ENCODE measurements at regions of chr10 and their contacts with region 1.

Region 1: DNA sequence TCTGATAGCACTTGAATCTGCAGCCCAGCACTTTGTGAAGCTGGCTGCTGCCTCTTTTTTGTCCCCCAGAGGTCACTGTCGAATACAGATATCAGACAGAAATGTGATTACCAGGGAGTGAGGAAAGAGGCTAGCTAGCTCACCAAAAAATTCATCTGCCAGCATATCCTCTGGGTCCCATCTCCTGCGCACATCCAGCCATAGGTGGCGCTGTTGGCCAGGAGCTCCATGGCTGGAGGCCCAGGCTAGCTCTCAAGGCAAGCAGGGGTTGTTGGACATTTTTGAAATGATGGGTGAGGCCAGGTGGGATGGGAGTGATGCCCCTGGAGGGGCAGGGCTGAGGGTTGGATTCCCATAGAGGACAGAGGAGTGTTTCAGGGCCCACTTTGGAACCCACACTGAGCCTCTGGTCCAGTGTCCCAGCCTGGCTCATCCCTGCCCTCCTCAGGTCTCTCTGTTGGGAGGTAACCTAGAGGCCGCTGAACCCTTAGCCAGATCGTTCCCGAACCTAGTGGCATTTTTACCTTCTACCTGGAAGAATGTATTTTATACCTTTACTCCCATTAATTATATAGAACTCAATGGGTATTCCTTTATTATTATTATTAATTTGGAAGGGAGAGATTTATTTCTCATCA is 14.8 kb downstream of the DPCD start:
- DNase-seq: peak; percentile 94
- ATAC-seq: peak; percentile 96
- H3K4me3 Mint-ChIP-seq: no peak overlapping the region
- H3K27ac Mint-ChIP-seq: peak overlapping the region; percentile 45; the same call in 1 of the 2 replicates
- H3K4me1 Mint-ChIP-seq: peaks cover 10% of the 10 kb centered on the region
- H3K27me3 Mint-ChIP-seq: no peaks in the 10 kb centered on the region
- CTCF ChIP-seq: peak; percentile 96

Region 2: GRCh38 chr10:101453791-101454718 is 148.8 kb before region 1 on chr10:
- CTCF ChIA-PET with region 1: no interaction called
- POLR2A ChIA-PET with region 1: no interaction called
- DNase-seq: no peak
- ATAC-seq: no peak
- H3K4me3 Mint-ChIP-seq: no peak overlapping the region
- H3K27ac Mint-ChIP-seq: no peak overlapping the region
- H3K4me1 Mint-ChIP-seq: no peaks in the 10 kb centered on the region
- H3K27me3 Mint-ChIP-seq: no peaks in the 10 kb centered on the region
- CTCF ChIP-seq: no peak

Region 3: GRCh38 chr10:101576211-101576863 is 26.5 kb before region 1 on chr10:
- CTCF ChIA-PET with region 1: interaction called, 30 read pairs
- POLR2A ChIA-PET with region 1: no interaction called
- DNase-seq: no peak
- ATAC-seq: no peak
- H3K4me3 Mint-ChIP-seq: no peak overlapping the region
- H3K27ac Mint-ChIP-seq: no peak overlapping the region
- H3K4me1 Mint-ChIP-seq: peaks cover 21% of the 10 kb centered on the region
- H3K27me3 Mint-ChIP-seq: peaks cover 27% of the 10 kb centered on the region
- CTCF ChIP-seq: no peak

Region 4: GRCh38 chr10:101646364-101646763 is 43.5 kb after region 1 on chr10:
- CTCF ChIA-PET with region 1: interaction called, 15 read pairs
- POLR2A ChIA-PET with region 1: no interaction called
- DNase-seq: no peak
- ATAC-seq: no peak
- H3K4me3 Mint-ChIP-seq: no peak overlapping the region
- H3K27ac Mint-ChIP-seq: no peak overlapping the region
- H3K4me1 Mint-ChIP-seq: peaks cover 48% of the 10 kb centered on the region
- H3K27me3 Mint-ChIP-seq: no peaks in the 10 kb centered on the region
- CTCF ChIP-seq: no peak

Region 5: DNA sequence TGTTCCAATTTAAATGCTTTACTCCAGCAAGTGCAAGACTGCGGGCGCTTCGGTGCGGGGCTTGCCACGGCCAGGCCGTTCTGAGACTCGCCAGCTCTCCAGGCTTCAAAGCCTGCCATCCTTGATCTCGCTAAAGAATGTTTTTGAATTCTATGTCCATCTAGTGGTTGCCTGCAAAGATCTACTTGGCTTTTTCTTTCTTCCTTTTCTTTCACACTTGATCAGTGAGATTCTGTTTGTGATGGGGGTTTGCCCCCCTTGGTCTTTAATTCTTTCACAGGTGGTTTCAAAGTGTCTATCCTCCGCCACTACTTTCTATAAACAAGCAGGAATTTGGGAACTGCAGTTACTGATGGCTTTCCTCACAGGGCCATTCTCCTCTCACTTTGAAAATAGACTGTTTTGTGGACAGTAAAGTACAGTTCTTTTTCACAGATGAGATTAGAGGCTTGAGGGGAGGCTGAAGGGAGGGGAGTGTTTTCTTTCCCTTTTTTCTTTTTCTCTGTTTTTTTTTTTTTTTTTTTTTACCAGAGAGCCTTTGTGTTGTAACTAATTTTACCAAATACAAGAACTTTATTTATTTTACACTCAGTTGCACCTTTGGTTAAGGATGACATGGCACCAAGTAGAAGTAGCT is 107.3 kb after region 1 on chr10:
- CTCF ChIA-PET with region 1: interaction called, 15 read pairs
- POLR2A ChIA-PET with region 1: no interaction called
- DNase-seq: no peak
- ATAC-seq: peak; percentile 47; the same call in 1 of the 2 replicates
- H3K4me3 Mint-ChIP-seq: no peak overlapping the region
- H3K27ac Mint-ChIP-seq: no peak overlapping the region
- H3K4me1 Mint-ChIP-seq: peaks cover 4% of the 10 kb centered on the region
- H3K27me3 Mint-ChIP-seq: no peaks in the 10 kb centered on the region
- CTCF ChIP-seq: no peak

Region 6: GRCh38 chr10:101749047-101750016 is 146.5 kb after region 1 on chr10:
- CTCF ChIA-PET with region 1: interaction called, 43 read pairs
- POLR2A ChIA-PET with region 1: no interaction called
- DNase-seq: peak; percentile 57
- ATAC-seq: peak; percentile 98
- H3K4me3 Mint-ChIP-seq: no peak overlapping the region
- H3K27ac Mint-ChIP-seq: peak overlapping the region; percentile 61
- H3K4me1 Mint-ChIP-seq: peaks cover 13% of the 10 kb centered on the region
- H3K27me3 Mint-ChIP-seq: peaks cover 7% of the 10 kb centered on the region
- CTCF ChIP-seq: no peak

Region 7: GRCh38 chr10:101774589-101775272 is 171.9 kb after region 1 on chr10:
- CTCF ChIA-PET with region 1: interaction called, 370 read pairs
- POLR2A ChIA-PET with region 1: interaction called, 6 read pairs
- DNase-seq: peak; percentile 64
- ATAC-seq: peak; percentile 6
- H3K4me3 Mint-ChIP-seq: peak overlapping the region; percentile 61
- H3K27ac Mint-ChIP-seq: no peak overlapping the region
- H3K4me1 Mint-ChIP-seq: peaks cover 50% of the 10 kb centered on the region
- H3K27me3 Mint-ChIP-seq: peaks cover 70% of the 10 kb centered on the region
- CTCF ChIP-seq: no peak

Region 8: DNA sequence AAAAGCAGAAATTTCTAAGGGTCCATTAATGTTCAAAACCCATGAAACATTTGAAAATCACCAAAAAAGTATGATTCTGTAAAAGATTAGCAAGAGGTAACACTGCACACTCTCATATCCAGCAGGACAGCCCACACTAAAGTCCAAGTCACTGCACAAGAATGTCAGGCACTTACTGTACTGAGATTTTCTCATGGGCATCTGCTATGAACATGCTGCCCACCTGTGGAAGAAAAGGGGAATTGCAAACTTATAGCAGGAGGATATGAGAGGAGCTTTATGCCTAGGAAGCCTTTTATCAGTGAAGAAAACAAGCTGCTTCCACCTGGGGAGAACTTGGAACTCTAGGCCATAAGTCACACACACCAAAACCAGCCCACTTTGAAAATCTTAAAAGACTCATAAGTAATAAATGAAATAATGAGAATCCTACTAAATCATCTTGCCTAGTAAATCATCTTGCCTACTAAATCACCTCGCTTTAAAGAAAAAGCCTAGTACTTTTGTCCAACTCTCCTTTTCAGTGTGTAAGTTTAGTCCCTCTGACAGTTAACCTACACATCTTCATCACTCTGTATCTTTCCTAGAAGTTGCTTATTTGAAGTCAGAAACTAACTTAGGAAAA is 407.0 kb after region 1 on chr10:
- CTCF ChIA-PET with region 1: interaction called, 10 read pairs
- POLR2A ChIA-PET with region 1: no interaction called
- DNase-seq: peak; percentile 31
- ATAC-seq: peak; percentile 96
- H3K4me3 Mint-ChIP-seq: no peak overlapping the region
- H3K27ac Mint-ChIP-seq: peak overlapping the region; percentile 1; the same call in 1 of the 2 replicates
- H3K4me1 Mint-ChIP-seq: peaks cover 21% of the 10 kb centered on the region
- H3K27me3 Mint-ChIP-seq: no peaks in the 10 kb centered on the region
- CTCF ChIP-seq: peak; percentile 53

Measured in WTC11 (cell line).